MCF 10A (cell line): ENCODE measurements at regions of chr1 and their contacts with region 1.

Region 1: GRCh38 chr1:203558064-203558760 is 64.3 kb downstream of the OPTC start:
- DNase-seq: peak; percentile 99
- H3K4me3 Mint-ChIP-seq: no peak overlapping the region
- H3K27ac Mint-ChIP-seq: peak overlapping the region; percentile 44
- H3K4me1 Mint-ChIP-seq: peaks cover 27% of the 10 kb centered on the region
- H3K27me3 Mint-ChIP-seq: no peaks in the 10 kb centered on the region
- CTCF ChIP-seq: no peak

Region 2: GRCh38 chr1:203512830-203513611 is 45.2 kb before region 1 on chr1:
- CTCF ChIA-PET with region 1: interaction called, 3 read pairs
- POLR2A ChIA-PET with region 1: interaction called, 5 read pairs
- intact Hi-C with region 1: loop called (anchors 1 kb)
- DNase-seq: peak; percentile 96
- H3K4me3 Mint-ChIP-seq: peak overlapping the region; percentile 47
- H3K27ac Mint-ChIP-seq: peak overlapping the region; percentile 93
- H3K4me1 Mint-ChIP-seq: peaks cover 45% of the 10 kb centered on the region
- H3K27me3 Mint-ChIP-seq: no peaks in the 10 kb centered on the region
- CTCF ChIP-seq: no peak

Region 3: GRCh38 chr1:203526572-203526971 is 31.6 kb before region 1 on chr1:
- CTCF ChIA-PET with region 1: interaction called, 6 read pairs
- POLR2A ChIA-PET with region 1: interaction called, 13 read pairs
- intact Hi-C with region 1: no loop called
- DNase-seq: peak; percentile 60
- H3K4me3 Mint-ChIP-seq: no peak overlapping the region
- H3K27ac Mint-ChIP-seq: no peak overlapping the region
- H3K4me1 Mint-ChIP-seq: peaks cover 19% of the 10 kb centered on the region
- H3K27me3 Mint-ChIP-seq: no peaks in the 10 kb centered on the region
- CTCF ChIP-seq: no peak

Region 4: DNA sequence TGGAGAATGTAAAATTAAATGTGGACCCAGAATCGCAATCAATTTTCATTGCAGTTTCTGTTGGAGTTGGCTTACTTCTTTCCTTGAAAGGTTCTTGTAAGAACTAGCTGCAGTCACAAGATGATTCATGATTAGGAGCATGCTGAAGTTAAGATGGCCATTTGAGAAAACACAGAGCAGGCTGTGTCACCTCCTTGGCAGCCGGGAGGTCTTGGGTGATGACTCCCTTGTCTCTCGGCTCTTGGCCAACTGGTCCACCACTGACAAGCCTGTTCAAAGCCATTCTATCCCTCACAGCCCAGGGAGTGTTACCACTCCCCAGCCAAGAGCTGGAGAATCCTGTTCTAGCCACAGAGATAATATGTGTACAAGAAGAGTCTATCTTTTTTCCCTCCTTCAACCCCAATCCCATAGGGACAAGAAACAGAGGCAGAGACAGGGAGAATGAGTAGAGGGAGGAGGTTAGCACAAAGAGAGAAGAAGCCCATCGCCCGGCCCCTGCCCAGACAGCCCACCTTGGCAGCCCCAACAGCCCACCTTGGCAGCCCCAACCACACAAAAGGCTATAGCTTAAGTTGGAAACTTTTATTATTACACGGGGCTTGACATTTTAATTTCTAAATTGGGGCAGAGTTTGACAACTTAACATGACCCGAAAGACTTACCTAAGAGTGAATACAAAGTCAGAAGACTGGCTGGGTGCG is 23.5 kb before region 1 on chr1:
- CTCF ChIA-PET with region 1: interaction called, 5 read pairs
- POLR2A ChIA-PET with region 1: interaction called, 29 read pairs
- intact Hi-C with region 1: loop called (anchors 1 kb)
- DNase-seq: peak; percentile 95
- H3K4me3 Mint-ChIP-seq: peak overlapping the region; percentile 35
- H3K27ac Mint-ChIP-seq: peak overlapping the region; percentile 58
- H3K4me1 Mint-ChIP-seq: peaks cover 36% of the 10 kb centered on the region
- H3K27me3 Mint-ChIP-seq: no peaks in the 10 kb centered on the region
- CTCF ChIP-seq: no peak

Region 5: DNA sequence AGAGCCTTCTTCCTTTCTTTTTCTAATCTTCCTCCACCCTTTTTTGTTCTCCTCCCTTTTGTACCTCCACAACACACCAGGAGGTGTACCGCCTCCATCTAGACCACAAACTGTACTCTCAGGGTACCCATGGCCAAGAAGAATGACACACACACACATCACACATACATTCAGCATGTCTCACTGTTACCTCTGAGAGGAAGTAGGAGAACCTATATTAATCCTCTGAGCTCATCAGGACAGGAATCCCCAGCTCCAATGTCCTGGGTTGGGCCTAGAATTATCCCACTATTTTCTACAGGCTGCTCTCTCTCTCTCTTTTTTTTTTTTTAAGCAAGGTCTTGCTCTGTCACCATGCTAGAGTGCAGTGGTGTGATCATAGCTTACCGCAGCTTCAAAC is 105.1 kb after region 1 on chr1:
- CTCF ChIA-PET with region 1: no interaction called
- POLR2A ChIA-PET with region 1: no interaction called
- intact Hi-C with region 1: loop called (anchors 5 kb)
- DNase-seq: peak; percentile 98
- H3K4me3 Mint-ChIP-seq: peak overlapping the region; percentile 3
- H3K27ac Mint-ChIP-seq: peak overlapping the region; percentile 58
- H3K4me1 Mint-ChIP-seq: peaks cover 34% of the 10 kb centered on the region
- H3K27me3 Mint-ChIP-seq: no peaks in the 10 kb centered on the region
- CTCF ChIP-seq: no peak